Common myeloid progenitor, CD34-positive (primary cell): ENCODE measurements at regions of chr11 and their contacts with region 1.

Region 1: DNA sequence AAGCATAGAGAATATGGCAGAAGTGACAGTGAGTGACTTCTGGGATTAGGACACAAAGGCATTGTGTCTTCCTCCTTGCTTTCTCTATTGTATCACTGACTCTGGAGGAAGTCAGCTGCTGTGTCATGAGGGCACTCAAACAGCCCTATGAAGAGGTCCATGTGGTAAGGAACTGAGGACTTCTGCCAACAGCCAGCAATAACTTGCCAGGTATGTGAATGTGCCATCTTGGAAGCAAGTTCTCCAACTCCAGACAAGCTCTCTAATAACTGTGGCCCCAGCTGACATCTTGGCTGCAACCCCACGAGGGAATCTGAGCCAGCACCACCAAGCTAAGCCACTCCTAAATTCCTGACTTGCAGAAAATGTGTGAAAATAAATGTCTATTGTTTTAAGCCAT is 83.6 kb upstream of the ZBED5 start:
- DNase-seq: no peak
- H3K4me3 ChIP-seq: no peak overlapping the region
- H3K27ac ChIP-seq: no peak overlapping the region
- H3K4me1 ChIP-seq: no peaks in the 10 kb centered on the region
- H3K27me3 ChIP-seq: no peaks in the 10 kb centered on the region

Region 2: GRCh38 chr11:10925144-10925926 is 16.1 kb before region 1 on chr11:
- CTCF ChIA-PET with region 1: no interaction called
- POLR2A ChIA-PET with region 1: no interaction called
- DNase-seq: no peak
- H3K4me3 ChIP-seq: no peak overlapping the region
- H3K27ac ChIP-seq: no peak overlapping the region
- H3K4me1 ChIP-seq: peaks cover under 1 to 7% (median 2%) of the 10 kb centered on the region in 4 experiments
- H3K27me3 ChIP-seq: peaks cover 3 to 16% (median 5%) of the 10 kb centered on the region in 5 experiments

Region 3: GRCh38 chr11:11022125-11022730 is 80.8 kb after region 1 on chr11:
- CTCF ChIA-PET with region 1: interaction called, 170 read pairs
- POLR2A ChIA-PET with region 1: no interaction called
- DNase-seq: peak in 2 of 3 donors; percentile 40 to 61
- H3K4me3 ChIP-seq: no peak overlapping the region
- H3K27ac ChIP-seq: no peak overlapping the region
- H3K4me1 ChIP-seq: no peaks in the 10 kb centered on the region
- H3K27me3 ChIP-seq: peaks cover 0 to 3% (median 0%) of the 10 kb centered on the region in 5 experiments